GM23248 (cell line): ENCODE measurements at regions of chr3 and their contacts with region 1.

Region 1: GRCh38 chr3:127959846-127960245 is 44.8 kb downstream of the KBTBD12 start:
- DNase-seq: peak; percentile 23
- H3K4me3 ChIP-seq: no peak overlapping the region
- H3K27ac ChIP-seq: no peak overlapping the region
- H3K4me1 ChIP-seq: no peaks in the 10 kb centered on the region
- H3K27me3 ChIP-seq: no peaks in the 10 kb centered on the region; the same call in 1 of the 2 replicates

Region 2: DNA sequence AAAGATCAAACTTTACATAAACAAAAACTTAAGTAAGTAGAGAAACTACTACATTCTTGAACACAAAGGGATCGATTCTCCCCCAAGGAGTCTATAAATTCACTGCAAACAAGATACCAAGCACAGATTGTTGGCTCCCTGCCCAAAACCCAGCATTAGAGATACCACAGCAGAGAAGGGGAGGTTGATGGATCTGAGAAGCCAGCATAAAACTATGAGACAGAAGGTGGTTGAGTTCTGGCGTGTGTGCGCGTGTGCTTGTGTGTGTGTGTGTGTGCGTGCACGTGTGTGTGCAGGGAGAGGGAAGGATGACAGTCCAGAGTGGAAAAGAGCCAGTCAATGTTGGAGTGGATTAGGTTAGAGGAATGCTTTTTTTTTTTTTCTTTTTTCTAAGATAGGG is 528.8 kb before region 1 on chr3:
- in situ Hi-C with region 1: no loop called
- DNase-seq: no peak
- H3K4me3 ChIP-seq: no peak overlapping the region
- H3K27ac ChIP-seq: no peak overlapping the region
- H3K4me1 ChIP-seq: no peaks in the 10 kb centered on the region
- H3K27me3 ChIP-seq: peaks cover 67% of the 10 kb centered on the region

Region 3: DNA sequence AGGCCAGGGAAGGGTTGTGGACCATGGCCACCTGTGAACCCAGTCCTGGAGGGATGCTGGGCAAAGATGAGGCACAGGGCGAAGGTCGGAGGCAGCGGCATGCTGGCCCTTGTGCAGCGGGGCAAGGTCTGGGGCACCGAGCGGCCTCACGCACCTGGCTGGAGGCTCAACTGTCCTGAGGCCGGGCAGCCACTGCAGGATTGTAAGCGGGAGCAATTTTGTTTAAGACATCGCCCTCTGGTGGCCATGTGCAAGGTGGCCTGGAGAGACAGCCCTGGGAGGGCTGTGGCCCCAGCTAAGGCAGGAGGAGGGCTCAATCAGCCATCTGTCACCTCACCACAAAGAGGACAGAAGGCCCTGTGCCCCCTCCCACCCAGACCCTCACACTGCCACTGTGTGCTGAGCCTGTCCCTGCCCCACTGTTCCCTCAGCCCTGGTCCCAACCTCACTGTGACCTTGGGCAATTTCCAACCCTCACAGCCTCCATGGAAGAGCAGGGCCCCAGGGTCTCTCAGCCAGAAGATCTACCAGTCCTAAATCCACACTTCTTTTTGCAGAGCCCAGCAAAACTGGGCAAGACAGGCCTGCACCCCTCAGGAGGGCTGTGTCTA is 415.5 kb before region 1 on chr3:
- in situ Hi-C with region 1: no loop called
- DNase-seq: peak; percentile 82
- H3K4me3 ChIP-seq: no peak overlapping the region
- H3K27ac ChIP-seq: no peak overlapping the region
- H3K4me1 ChIP-seq: no peaks in the 10 kb centered on the region
- H3K27me3 ChIP-seq: peaks cover 4% of the 10 kb centered on the region; the same call in 1 of the 2 replicates

Region 4: DNA sequence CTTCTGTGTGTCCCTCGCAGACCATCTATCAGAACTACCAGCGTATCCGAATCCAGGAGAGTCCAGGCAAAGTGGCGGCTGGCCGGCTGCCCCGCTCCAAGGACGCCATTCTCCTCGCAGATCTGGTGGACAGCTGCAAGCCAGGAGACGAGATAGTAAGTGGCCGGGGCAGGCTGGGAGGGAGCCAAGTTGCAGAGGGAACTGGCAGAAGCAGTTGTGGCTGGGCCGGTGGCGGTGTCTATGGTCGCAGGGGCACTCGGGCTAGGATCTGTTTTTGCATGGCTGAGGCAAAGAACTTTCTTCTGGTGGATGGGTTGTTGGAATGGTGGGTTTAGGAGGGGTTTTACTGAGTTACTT is 351.5 kb before region 1 on chr3:
- in situ Hi-C with region 1: no loop called
- DNase-seq: no peak
- H3K4me3 ChIP-seq: no peak overlapping the region
- H3K27ac ChIP-seq: no peak overlapping the region
- H3K4me1 ChIP-seq: peaks cover 22% of the 10 kb centered on the region
- H3K27me3 ChIP-seq: no peaks in the 10 kb centered on the region

Region 5: GRCh38 chr3:127667119-127667681 is 292.6 kb before region 1 on chr3:
- in situ Hi-C with region 1: loop called (anchors 10 kb)
- DNase-seq: no peak
- H3K4me3 ChIP-seq: no peak overlapping the region
- H3K27ac ChIP-seq: no peak overlapping the region
- H3K4me1 ChIP-seq: no peaks in the 10 kb centered on the region
- H3K27me3 ChIP-seq: no peaks in the 10 kb centered on the region